ENCODE measurements at regions of chr7 and their contacts with region 1.

Region 1: DNA sequence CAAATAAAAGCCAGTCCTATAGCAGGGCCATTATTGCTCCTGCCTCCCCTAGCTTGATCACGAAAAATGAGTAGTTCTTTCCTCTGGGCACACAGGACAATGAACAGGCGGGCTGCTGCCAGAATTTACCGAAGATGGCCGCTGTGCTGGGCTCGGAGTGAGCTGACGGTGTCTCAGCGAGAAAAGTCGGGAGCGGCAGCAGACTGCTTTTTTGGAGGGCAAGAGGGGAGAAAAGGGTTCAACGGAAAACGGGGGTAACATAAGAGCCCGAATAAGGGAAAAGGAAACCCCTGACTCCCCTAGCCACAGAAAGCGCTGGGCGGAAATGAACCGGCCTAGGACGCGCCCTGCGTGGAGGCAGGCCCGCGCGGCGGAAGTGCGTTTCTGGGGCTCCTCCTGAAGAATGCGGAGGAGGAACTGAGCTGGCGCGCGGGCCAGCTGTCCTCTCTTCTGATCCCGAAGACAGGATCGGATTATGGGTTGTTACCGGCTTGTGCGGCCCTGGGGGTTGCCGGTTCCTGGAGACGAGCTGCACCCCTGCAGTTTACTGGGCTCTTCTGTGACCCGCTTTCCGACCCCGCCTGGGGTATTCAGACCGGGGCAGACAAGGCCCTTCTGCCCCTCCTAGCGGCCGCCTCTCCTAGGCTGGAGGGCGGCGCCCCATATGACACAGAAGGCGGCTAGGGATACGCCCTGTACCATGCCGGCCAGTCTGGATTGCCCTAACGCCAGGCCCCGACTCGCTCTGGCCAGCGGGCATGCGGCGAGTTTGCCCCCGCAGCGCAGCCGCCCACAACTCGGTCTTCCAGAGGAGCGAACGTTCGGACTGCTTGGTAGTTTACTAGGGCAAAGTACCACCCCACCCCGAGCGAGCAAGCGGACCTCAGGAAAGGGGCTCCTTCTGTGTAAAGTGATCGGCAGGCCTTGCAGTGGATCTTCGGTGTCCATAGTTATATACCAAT is 30.1 kb upstream of the KMT2E start:
- H3K4me3 Mint-ChIP-seq: peak overlapping the region; percentile 90
- H3K27ac Mint-ChIP-seq: peak overlapping the region; percentile 100
- H3K4me1 Mint-ChIP-seq: peaks cover 49% of the 10 kb centered on the region
- H3K27me3 Mint-ChIP-seq: no peaks in the 10 kb centered on the region

Region 2: GRCh38 chr7:104469166-104469820 is 514.6 kb before region 1 on chr7:
- intact Hi-C with region 1: no loop called
- H3K4me3 Mint-ChIP-seq: no peak overlapping the region
- H3K27ac Mint-ChIP-seq: no peak overlapping the region
- H3K4me1 Mint-ChIP-seq: no peaks in the 10 kb centered on the region
- H3K27me3 Mint-ChIP-seq: no peaks in the 10 kb centered on the region

Region 3: DNA sequence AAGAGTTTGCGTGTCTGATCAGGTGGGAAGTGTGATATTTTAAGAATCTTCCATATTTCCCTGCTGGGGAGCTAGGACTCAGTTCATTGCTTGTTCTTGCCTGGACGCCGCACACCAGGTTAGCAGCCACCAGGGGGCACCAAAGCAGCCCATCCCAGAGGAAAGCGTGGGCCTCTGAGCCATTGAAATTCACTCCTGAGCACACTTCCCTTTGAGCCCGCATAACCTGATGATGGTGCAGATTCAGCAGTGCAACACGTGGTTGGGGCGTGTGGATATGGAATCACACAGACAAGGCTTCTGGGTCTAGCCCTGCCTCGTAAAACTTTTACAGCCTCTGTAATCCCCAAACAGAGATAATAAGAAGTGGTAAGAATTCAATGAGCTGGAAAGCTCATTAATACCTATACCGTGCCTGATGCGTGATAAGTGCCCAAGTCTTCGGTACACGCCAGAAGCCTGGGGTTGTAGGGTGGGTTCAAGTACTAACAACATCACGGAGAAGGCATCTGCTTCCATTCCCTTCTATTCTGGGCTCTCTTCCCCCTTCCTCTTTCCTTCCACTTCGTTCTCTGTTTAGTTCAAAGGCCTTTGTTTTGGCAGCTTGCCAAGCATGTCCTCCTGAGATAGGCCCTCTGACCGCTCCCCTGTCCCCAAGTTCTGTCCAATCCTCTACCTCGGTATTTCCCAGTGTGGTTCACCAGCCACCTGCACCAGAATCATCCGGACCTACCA is 100.0 kb before region 1 on chr7:
- intact Hi-C with region 1: loop called (anchors 5 kb)
- H3K4me3 Mint-ChIP-seq: peak overlapping the region; percentile 65
- H3K27ac Mint-ChIP-seq: peak overlapping the region; percentile 96
- H3K4me1 Mint-ChIP-seq: peaks cover 16% of the 10 kb centered on the region
- H3K27me3 Mint-ChIP-seq: no peaks in the 10 kb centered on the region

Region 4: DNA sequence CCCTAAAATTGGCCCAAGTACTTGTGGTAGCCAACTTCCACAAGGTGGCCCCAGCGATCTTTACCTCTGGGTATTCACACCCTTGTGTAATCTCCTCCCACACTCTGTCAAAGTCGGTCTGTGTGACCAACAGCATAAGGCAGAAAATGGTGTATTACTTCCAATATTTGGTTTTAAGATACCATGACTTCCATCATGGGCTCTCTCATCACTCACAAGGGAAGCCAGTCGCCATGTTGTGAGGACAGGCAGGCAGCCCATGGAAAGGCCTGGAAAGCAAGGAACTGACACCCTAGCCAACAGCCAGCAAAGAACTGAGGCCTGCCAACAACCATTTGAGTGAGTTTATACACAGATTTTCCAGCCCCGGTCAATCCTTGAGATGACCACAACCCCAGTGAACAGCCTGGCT is 60.8 kb before region 1 on chr7:
- intact Hi-C with region 1: loop called (anchors 5 kb)
- H3K4me3 Mint-ChIP-seq: no peak overlapping the region
- H3K27ac Mint-ChIP-seq: peak overlapping the region; percentile 45
- H3K4me1 Mint-ChIP-seq: peaks cover 4% of the 10 kb centered on the region
- H3K27me3 Mint-ChIP-seq: no peaks in the 10 kb centered on the region

Region 5: DNA sequence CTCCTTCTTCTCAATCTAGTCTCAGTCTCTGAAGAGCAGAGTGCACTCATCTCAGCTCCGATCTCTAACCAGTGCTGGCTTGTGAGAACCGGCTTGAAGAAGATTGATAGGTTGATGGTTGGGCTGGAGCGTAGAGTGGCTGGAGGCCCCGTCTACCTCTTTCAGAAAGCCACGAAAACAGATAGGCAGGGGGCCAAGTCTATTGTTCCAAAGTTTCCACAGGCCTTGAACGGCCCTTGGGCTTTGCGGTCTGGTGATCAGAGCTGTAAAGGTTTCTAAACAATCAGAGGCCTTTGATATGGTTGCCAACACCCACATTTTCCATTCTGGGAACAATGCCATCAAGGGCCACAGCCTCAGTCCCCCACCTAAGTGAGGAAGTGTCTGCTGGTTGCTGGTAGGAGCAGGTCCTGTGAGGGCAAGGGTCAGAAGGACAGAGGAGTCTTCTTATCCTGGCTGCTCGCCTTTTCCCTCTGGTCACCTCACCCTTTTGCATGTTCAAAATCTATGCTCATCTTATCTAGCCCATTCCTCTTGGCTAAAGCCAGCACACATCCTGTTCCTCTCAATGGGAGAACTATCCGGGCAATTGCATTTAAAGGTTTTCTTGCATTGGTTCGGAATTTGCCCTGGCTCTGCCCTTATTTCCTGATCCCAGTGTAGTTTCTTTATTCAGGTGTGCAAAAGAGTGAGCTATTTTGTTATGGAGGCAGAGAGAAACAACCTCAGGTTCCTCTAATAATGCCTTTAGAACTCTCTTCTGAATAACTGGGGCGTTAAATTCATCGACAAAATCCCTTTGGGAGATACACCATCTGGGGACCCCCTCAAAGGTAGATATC is 40.1 kb before region 1 on chr7:
- intact Hi-C with region 1: loop called (anchors 1 kb)
- H3K4me3 Mint-ChIP-seq: peak overlapping the region; percentile 77
- H3K27ac Mint-ChIP-seq: peak overlapping the region; percentile 100
- H3K4me1 Mint-ChIP-seq: peaks cover 66% of the 10 kb centered on the region
- H3K27me3 Mint-ChIP-seq: no peaks in the 10 kb centered on the region

Region 6: DNA sequence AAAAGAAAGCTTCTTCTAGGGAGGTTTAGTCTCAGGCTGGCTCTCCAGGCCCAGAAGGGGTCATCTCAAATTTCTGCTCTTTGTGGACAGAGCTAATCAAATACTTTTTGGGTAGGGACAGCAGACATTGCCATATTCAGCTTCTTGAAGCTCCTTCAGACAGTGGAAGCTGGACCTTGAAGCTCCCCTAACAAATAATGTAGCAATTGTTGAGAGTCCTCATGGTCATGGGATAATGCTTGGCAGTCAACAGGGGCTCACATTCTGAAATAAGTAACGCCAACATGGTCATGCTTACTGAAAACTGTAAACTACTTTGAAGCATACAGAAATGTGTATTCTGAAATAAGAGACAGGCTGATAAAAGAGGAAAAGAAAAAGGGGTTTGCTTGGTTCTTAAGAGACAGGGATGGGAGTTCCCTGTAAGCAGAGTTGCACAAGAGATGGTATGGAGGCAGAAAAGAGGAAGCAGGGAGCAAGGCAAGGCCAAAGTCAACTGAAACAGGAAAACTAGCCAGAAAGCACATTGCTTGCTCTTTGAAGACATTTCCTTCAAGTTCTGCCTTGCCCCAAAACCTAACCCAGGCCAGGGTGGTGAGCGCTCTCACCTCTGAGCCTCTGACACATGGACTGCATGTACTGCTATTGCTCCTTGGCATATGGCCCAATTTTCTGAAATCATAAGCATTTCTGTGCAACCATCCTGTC is 23.0 kb before region 1 on chr7:
- intact Hi-C with region 1: loop called (anchors 2 kb)
- H3K4me3 Mint-ChIP-seq: no peak overlapping the region
- H3K27ac Mint-ChIP-seq: peak overlapping the region; percentile 91
- H3K4me1 Mint-ChIP-seq: peaks cover 64% of the 10 kb centered on the region
- H3K27me3 Mint-ChIP-seq: no peaks in the 10 kb centered on the region

Region 7: DNA sequence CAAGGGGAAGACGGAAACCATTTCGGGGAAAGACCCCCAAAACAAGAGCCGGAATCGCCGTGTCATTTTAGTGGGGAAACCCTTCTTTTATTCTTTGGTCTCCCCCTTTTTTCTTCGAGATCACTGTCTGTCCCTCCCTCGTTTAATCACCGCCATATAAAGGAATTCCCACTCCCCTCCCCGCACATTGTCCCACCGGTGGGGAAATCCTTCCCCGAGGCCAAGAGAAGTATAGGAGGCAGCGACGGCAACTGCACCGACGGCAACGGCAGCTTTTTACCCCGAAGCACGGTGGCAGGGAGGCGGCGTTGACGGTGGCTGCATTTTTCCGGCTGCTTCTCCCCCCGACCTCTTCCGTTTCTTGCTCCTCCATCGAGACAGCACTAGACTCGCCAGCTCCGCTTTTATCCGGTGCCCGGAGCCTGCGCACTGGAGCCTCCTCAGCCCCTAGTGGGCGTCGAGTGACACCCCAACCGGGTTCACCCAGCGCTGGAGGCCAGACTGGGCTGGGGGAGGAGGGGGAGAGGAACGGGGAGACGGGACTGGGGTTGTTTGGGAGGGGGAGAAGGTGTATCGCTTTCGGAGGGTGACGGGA is 29.5 kb after region 1 on chr7:
- intact Hi-C with region 1: loop called (anchors 1 kb)
- H3K4me3 Mint-ChIP-seq: peak overlapping the region; percentile 96
- H3K27ac Mint-ChIP-seq: peak overlapping the region; percentile 100
- H3K4me1 Mint-ChIP-seq: peaks cover 36% of the 10 kb centered on the region
- H3K27me3 Mint-ChIP-seq: no peaks in the 10 kb centered on the region

Region 8: DNA sequence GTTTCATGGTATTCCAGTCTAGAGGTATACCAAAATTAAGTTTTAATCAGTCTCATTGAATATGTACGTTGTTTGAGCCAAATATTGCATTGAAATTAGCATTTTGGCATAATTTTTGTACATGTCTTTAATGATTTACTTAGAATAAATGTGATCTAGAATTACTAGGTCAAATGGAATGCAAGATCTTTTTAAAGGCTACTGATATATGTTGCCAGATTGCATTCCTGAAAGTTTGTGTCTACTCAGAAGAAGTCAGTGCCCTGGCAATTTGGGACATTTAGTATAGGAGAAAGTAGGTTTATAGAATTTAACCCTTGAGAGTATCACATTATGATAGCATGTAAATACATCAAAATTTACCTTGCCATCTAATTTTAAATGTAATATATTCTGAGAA is 62.6 kb after region 1 on chr7:
- intact Hi-C with region 1: loop called (anchors 2 kb)
- H3K4me3 Mint-ChIP-seq: no peak overlapping the region
- H3K27ac Mint-ChIP-seq: no peak overlapping the region
- H3K4me1 Mint-ChIP-seq: peaks cover 38% of the 10 kb centered on the region
- H3K27me3 Mint-ChIP-seq: no peaks in the 10 kb centered on the region

Measured in dendritic cell treated with granulocyte-macrophage colony-stimulating factor and Interleukin-4, amounts not matched to agents 40 ng/mL and 50 ng/mL, for 4 days (primary cell).